ENCODE measurements at regions of chr20 and their contacts with region 1.

Region 1: DNA sequence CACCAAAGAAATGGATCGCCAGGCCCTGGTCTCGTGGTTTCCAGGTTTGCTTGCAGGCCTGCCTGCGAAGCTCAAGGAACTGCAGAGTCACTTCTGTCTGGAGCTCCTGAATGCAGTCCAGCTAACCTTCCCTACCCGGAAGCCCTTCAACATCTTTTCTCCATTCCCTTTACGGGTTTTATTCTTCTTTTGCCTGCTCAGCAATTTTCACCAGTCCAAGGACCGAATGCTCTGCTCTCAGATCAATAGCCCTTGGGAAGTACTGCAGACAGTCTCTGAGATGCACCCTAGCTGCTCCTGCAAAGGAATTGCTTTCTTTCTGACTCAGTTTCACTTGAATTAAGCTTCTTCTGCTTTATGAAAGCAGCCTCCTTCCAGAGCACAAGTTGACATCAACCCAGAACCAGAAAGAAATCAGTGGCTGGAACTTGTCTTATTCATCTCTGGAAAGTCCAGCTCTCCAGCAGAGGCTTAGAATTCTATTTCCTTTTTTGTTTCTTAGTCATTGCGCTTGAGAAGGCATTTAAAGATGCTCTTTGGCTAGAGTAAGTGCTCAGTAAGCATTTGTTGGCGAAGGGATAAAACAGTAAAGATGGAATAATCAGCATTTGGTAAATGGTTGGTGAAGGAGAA is 18.7 kb upstream of the YWHAB start:
- DNase-seq: no peak
- ATAC-seq: no peak
- H3K4me3 ChIP-seq: no peak overlapping the region
- H3K27ac ChIP-seq: no peak overlapping the region
- H3K4me1 ChIP-seq: no peaks in the 10 kb centered on the region
- H3K27me3 ChIP-seq: peaks cover 29% of the 10 kb centered on the region
- CTCF ChIP-seq: no peak
- POLR2A ChIP-seq: no peak
- RAD21 ChIP-seq: no peak

Region 2: GRCh38 chr20:44683263-44684046 is 183.4 kb before region 1 on chr20:
- CTCF ChIA-PET with region 1: interaction called, 3 read pairs
- POLR2A ChIA-PET with region 1: no interaction called
- dilution Hi-C with region 1: no loop called
- in situ Hi-C with region 1: loop called (anchors 10 kb)
- intact Hi-C with region 1: loop called (anchors 1 kb)
- DNase-seq: peak; percentile 42
- ATAC-seq: peak; percentile 69
- H3K4me3 ChIP-seq: no peak overlapping the region
- H3K27ac ChIP-seq: no peak overlapping the region
- H3K4me1 ChIP-seq: peaks cover under 1% of the 10 kb centered on the region; the same call in 1 of the 2 replicates
- H3K27me3 ChIP-seq: peaks cover 9% of the 10 kb centered on the region
- CTCF ChIP-seq: peak; percentile 65
- POLR2A ChIP-seq: no peak
- RAD21 ChIP-seq: peak; percentile 64

Region 3: DNA sequence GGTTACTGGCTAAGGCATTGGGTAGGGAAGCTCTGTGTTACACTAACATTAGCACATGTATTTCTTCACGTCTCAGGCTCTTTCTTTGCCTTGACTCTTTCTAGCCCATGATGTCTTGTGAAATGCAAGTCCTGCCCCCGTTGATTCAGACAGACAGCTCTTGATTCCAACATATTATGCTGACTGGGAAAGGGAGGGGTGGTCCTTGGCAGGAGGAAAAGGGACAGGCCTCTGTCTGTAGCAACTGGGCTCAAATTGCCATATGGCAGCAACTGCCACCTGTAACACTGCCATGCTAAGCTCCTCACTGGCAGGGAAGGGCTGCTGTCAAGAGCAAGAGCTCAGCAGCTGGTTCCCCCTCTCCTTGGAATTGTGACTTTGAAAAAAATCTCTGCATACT is 126.9 kb before region 1 on chr20:
- CTCF ChIA-PET with region 1: interaction called, 3 read pairs
- POLR2A ChIA-PET with region 1: interaction called, 4 read pairs
- dilution Hi-C with region 1: no loop called
- in situ Hi-C with region 1: loop called (anchors 5 kb)
- intact Hi-C with region 1: no loop called
- DNase-seq: no peak
- ATAC-seq: no peak
- H3K4me3 ChIP-seq: no peak overlapping the region
- H3K27ac ChIP-seq: no peak overlapping the region
- H3K4me1 ChIP-seq: peaks cover 3% of the 10 kb centered on the region; the same call in 1 of the 2 replicates
- H3K27me3 ChIP-seq: peaks cover 45% of the 10 kb centered on the region
- CTCF ChIP-seq: no peak
- POLR2A ChIP-seq: no peak
- RAD21 ChIP-seq: no peak

Region 4: DNA sequence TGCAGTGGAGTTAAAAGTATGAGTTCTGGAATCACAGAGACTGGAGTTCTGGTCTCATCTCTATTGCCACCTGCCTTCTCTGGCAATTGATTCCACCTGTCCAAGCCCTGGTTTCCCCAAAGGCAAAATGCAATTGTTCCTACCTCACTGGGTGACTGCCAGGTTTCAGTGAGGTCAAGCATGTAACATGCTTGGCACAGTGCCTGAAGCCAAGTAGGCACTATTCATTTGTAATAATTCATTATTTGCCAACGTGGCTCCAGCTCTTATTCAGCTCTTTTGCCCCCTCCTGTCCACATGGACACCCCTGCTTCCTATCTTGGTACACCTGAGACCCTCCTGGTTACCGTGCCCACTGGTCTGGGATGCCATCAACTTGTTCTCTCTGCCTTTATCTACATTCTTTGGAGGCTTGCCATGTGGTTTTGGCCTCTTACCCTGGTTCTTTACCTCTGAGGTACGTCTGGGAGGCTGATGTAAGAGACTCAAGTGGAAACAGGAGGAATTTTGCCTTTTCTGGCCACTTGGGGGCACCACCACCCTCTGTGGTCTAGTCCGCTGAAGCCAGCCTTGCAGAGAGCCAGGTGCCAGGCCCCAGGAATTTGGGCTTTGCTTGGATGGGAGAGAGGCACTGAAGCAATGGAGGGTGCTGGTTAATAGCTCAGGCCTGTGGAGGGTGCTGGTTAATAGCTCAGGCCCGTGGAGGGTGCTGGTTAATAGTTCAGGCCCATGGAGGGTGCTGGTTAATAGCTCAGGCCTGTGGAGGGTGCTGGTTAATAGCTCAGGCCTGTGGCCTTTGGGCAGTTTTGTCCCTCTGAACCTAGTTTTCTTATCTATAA is 119.4 kb before region 1 on chr20:
- CTCF ChIA-PET with region 1: interaction called, 4 read pairs
- POLR2A ChIA-PET with region 1: interaction called, 4 read pairs
- dilution Hi-C with region 1: no loop called
- in situ Hi-C with region 1: loop called (anchors 5 kb)
- intact Hi-C with region 1: loop called (anchors 1 kb)
- DNase-seq: peak; percentile 53
- ATAC-seq: peak; percentile 64
- H3K4me3 ChIP-seq: no peak overlapping the region
- H3K27ac ChIP-seq: no peak overlapping the region
- H3K4me1 ChIP-seq: peaks cover 1% of the 10 kb centered on the region; the same call in 1 of the 2 replicates
- H3K27me3 ChIP-seq: peaks cover 82% of the 10 kb centered on the region
- CTCF ChIP-seq: peak; percentile 66
- POLR2A ChIP-seq: no peak
- RAD21 ChIP-seq: peak; percentile 54